Activated CD4-positive, alpha-beta T cell treated with anti-CD3 and anti-CD28 coated beads, Interleukin-2, amount 10 ng/mL, durations not matched to agents 24 days and 14 days (primary cell): ENCODE measurements at regions of chr4 and their contacts with region 1.

Region 1: GRCh38 chr4:118113220-118113619 is 78.9 kb downstream of the NDST3 start:
- DNase-seq: no peak
- H3K4me3 Mint-ChIP-seq: peak overlapping the region; percentile 29
- H3K27ac Mint-ChIP-seq: no peak overlapping the region
- H3K4me1 Mint-ChIP-seq: peaks cover 5% of the 10 kb centered on the region
- H3K27me3 Mint-ChIP-seq: peaks cover 2% of the 10 kb centered on the region

Region 2: DNA sequence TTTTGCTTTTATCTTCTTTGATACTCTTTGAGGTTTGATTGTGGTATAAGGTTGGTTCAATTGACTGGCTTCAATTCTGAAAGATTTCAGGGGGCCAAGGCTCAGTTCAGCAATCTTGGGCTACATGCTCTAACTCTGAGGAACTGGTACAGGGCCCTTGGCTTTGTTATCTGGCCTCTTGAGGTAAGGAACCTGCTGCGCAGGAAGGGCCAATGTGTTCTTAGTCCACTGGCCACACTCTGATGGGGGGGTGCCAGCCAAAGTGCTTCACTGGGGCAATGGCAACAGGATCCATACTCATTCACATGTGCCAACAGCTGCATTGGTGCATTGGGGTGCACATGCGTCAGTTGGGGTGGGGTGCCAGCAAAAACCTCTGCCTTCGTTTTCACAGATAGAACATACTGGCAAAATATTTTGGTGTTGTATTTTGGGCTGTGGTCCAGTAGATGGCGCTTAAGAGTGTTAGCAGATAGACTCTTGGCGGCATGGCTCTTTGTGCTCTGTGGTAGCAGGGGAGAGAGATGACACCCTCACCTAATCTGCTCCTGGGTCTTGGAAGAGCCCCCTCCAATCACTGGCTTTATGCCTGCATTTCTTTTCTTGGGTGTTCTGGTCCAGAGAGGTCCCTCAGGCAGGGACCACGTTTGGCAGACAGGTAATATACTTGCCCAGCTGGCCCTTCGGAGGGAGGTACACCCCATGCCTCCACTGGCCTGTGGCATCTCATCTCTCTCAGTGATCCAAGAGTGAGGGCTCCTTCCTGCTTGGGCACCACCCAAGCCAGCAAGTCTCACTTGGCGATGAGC is 36.1 kb before region 1 on chr4:
- intact Hi-C with region 1: loop called (anchors 5 kb)
- DNase-seq: peak; percentile 75
- H3K4me3 Mint-ChIP-seq: no peak overlapping the region
- H3K27ac Mint-ChIP-seq: no peak overlapping the region
- H3K4me1 Mint-ChIP-seq: peaks cover 5% of the 10 kb centered on the region
- H3K27me3 Mint-ChIP-seq: peaks cover 5% of the 10 kb centered on the region